Left cardiac atrium (tissue), 4 donors: ENCODE measurements at regions of chr17 and their contacts with region 1.

Region 1: DNA sequence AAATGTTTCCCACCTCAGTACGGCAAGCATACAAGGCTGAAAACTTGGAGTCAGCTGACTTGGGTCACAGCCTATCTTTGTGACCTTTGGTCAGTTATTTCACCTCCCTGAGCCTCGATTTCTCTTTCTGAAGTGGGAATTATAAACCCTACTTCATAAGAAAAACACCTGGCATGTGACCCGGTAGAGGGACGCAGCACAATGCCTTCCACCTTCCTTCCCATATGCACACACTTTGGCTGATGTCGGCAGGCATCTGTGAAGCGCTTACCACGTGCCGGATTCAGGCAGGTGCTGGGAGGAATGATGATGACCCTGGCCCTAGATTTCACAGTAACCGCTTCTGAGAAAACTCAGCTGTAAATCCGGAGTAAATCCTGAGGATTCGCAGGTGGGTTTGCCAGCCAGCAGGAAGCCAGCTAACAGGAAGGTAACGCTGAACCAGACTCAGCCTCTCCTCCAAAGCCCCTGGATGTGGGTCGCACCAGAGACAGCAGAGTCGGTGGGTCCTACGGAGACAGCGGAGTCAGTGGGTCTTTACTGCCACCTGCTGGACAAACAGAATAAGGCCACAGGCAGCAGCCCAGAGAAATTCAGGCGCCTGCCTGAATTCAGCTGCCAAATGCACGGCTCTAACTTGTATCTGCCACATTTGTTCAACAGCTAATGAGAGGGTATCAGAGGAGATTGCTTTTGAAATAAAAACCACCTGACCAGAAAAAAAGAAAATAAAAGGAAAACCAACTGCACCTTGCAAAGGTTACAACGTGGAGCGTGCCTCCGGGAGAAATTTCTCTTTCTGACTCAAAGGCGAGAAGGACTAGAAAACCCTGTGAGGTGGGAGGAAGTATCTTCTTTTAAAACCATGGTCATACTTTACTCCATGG is 16.6 kb downstream of the COPRS start:
- DNase-seq: peak; percentile 72
- ATAC-seq: peak; percentile 90 to 93

Region 2: DNA sequence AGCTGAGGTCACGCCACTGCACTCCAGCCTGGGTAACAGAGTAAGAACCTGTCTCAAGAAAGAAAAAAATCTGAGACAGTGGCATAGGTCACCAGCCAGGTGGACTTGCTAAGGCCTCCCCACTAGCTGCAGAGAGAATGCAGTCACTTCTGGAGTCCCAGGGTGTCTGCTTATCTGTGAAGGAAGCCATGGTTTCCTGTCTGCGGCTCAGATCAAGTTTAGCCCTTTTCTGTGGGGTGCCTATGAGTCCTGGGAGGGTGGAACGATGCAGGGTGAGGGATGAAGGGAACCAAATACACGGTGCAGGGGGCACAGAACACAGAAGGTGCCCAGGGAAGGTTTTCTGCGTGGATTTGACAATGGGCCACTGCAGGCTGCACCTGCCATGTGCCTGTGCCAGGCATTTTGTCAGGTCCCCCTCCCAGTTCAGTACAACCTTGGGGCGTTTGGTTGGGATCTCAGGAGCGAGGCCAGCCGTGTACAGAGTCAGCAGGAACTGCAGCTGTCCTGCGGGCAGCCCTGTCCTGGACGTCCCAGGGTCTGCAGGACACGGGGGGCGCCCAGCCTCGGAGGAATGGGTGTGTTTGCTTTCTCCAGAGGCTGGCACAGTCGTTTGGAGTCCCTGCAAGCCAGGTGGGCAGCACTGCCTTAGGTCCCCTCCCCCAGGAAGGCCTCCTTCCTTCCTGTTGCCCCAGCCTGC is 409.2 kb before region 1 on chr17:
- intact Hi-C with region 1: loop called (anchors 5 to 10 kb)
- DNase-seq: no peak
- ATAC-seq: no peak

Region 3: DNA sequence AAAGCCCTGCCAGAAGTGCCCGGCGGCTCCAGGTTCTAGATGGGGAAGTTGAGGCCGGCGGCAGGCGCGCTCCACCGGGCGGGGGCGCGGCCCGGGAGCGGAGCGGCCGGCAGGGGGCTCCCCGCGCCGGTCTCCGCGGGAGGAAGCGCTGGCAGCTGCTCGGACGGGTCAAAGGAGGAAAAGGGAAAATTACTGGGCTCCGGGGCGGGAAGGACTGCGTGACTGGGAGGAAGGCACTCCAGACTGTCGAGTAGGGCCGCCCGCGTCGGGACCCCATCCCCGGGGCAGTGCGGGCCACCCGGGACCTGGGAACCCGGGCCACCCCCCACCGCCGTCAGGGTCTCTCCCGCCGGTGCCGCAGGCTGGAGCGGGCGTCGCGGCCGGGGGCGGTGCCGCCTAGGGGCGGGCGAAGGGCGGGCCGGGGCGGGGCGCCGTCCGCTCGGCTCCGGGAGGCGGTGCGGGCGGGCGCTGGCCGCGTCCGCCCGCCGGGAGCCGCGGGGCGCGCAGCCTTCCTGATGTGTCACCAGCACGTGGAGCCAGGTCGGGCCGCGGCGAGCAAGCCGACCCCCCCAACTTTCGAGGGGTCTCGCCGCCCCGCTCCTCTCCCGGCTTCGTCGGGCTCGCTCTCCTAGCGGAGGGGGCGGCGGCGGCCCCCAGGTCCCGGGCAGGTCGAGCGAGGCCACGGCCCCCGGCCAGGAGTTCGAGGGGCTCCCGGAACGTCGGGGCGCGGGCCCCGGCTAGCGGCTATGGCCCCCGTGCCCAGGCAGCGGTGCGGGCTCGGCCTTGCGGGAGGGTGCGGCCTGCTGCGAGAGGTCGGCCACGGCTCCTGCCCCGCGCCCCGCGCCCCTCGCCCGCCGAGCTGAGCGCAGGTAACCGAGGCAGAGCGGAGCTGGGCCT is 283.4 kb before region 1 on chr17:
- intact Hi-C with region 1: loop called (anchors 1 to 2 kb)
- DNase-seq: peak; percentile 86
- ATAC-seq: peak; percentile 89 to 91

Region 4: GRCh38 chr17:31858642-31859473 is 16.4 kb after region 1 on chr17 and contains the start of gene COPRS:
- intact Hi-C with region 1: no loop called
- DNase-seq: peak; percentile 91
- ATAC-seq: peak; percentile 91 to 97
- total RNA-seq, gene COPRS: 51.7 to 55.3 TPM